ENCODE measurements at regions of chr7 and their contacts with region 1.

Region 1: GRCh38 chr7:30164567-30164966 is 29.8 kb downstream of the MTURN start:
- DNase-seq: no peak
- H3K4me3 ChIP-seq: no peak overlapping the region
- H3K27ac ChIP-seq: peak overlapping the region in 2 of 4 donors; percentile 65 to 73
- H3K4me1 ChIP-seq: peaks cover 15 to 81% (median 40%) of the 10 kb centered on the region in 3 donors
- H3K27me3 ChIP-seq: no peaks in the 10 kb centered on the region
- CTCF ChIP-seq: peak; percentile 33 to 77 (median 56)
- POLR2A ChIP-seq: no peak

Region 2: DNA sequence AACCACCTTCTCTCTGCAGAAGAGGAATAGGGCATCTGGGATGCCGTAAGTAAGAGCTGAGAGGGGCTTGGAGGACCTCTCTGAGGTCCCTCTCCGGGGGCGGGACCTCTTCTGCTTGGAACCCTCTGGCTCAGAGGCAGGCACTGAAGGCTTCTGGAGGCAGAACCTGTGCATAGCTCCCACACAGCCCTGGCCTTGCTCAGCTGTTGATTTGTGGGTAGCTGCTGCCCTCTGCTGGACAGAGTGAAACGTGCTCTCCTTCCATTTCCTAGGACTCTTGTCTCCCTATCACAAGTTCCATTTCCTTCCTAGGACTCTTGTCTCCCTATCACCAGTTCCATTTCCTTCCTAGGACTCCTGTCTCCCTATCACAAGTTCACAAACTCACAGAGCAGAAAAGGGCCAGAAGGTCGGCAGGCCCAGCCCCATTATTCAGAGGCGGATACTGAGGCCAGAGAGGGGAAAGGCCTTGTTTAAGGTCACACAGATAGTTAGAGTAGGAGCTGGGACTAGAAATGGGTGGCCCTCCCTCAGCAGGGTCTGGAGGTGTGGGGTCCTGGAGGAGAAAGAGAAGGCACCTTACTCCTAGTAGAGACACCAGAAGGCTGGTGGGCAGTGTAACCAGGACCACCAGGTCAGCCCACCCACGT is 399.8 kb after region 1 on chr7:
- intact Hi-C with region 1: loop called (anchors 10 kb)
- DNase-seq: no peak
- H3K4me3 ChIP-seq: no peak overlapping the region
- H3K27ac ChIP-seq: no peak overlapping the region
- H3K4me1 ChIP-seq: peaks cover 0 to 43% (median 14%) of the 10 kb centered on the region in 3 donors
- H3K27me3 ChIP-seq: no peaks in the 10 kb centered on the region
- CTCF ChIP-seq: peak; percentile 61 to 91 (median 84)
- POLR2A ChIP-seq: no peak